BJ (cell line): ENCODE measurements at regions of chr2 and their contacts with region 1.

Region 1: DNA sequence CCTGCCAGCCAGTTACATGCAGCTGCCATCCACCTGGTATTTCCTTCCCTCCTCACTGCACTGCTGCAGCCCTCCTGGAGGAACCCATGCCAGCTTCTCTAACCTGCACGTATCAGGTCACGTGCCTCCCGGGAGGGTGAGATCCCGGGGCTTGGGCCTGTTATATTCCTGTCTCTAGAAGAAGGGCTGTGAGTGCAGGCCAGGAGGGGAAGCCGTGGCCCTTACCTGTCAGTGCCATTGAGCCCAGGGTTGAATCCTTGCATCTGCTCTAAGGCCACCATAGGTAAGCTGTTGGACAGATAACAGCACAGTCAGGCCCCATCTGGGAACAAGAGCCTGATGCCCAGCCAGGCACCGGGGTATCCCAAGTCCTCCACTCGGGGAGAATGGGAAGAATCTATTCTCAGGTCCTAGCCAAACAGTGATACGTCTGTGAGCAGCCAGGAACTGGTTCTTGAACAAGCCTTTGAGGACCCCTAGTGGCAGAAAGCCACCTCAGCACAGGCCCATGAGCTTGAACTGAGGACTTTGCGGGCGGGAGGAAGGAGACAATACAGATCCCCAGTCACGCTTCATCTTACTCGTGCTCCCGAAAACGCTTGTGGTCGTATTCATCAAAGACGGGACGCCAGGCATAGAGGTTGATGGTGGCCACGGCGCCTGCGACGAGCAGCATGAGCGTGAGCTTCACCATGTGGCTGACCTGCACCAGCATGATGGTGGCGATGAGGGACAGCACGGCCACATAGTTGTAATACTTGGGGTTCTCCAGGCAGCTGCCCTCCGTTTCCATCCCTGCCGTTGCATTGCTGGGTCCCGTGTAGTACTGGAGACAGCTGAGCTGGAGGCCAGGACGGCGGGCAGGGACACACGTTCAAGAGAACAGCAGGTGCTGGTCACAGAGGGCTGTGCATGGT is 34.4 kb downstream of the CENPO start:
- DNase-seq: peak; percentile 29
- H3K4me3 ChIP-seq: no peak overlapping the region
- H3K27me3 ChIP-seq: no peaks in the 10 kb centered on the region
- CTCF ChIP-seq: peak; percentile 93

Region 2: DNA sequence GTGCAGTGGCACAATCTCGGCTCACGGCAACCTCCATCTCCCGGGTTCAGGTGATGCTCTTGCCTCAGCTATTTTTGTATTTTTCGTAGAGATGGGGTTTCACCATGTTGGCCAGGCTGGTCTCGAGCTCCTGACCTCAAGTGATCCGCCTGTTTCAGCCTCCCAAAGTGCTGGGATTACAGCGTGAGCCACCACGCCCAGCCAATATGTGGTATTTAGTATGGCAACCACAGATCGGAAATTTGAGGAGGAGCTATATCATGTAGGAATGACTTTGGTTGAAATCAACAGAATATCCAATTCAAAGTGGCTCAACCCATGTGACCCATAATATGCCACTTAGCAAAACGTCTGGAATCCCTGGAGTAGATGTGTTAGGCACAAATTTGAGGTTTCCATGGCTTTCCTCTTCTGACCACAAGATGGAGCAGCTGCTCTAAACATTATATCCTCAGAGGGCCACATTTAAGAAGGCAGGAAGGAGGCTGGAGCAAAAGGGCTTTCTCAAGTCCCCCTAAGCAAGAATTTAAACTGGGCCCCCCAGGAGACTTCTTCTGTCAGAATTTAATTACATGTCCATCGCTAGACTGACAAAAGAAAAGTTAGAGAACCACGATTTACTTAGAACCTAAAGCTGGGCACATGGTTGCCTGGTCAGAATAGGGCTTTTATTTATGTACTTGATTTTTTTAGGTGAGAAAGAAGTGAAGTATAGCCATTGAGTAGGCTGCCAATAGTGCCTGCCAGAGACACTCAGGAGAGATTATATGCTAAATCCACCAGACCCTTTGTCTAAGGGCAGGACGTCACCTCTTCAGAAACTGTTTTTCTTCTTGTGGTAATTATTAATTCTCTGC is 417.7 kb before region 1 on chr2:
- CTCF ChIA-PET with region 1: interaction called, 76 read pairs
- POLR2A ChIA-PET with region 1: no interaction called
- DNase-seq: no peak
- H3K4me3 ChIP-seq: no peak overlapping the region
- H3K27me3 ChIP-seq: no peaks in the 10 kb centered on the region
- CTCF ChIP-seq: peak; percentile 81

Region 3: GRCh38 chr2:24435391-24436316 is 391.9 kb before region 1 on chr2:
- CTCF ChIA-PET with region 1: interaction called, 12 read pairs
- POLR2A ChIA-PET with region 1: no interaction called
- DNase-seq: no peak
- H3K4me3 ChIP-seq: no peak overlapping the region
- H3K27me3 ChIP-seq: no peaks in the 10 kb centered on the region
- CTCF ChIP-seq: no peak

Region 4: GRCh38 chr2:24792874-24793760 is 34.5 kb before region 1 on chr2 and contains the starts of genes CENPO and PTRHD1:
- CTCF ChIA-PET with region 1: interaction called, 12 read pairs
- POLR2A ChIA-PET with region 1: no interaction called
- DNase-seq: peak; percentile 78
- H3K4me3 ChIP-seq: peak within 1 kb of the TSS; percentile 80
- H3K27me3 ChIP-seq: no peaks in the 10 kb centered on the region
- CTCF ChIP-seq: peak; percentile 67
- polyA plus RNA-seq, gene CENPO: 18.2 and 19.4 TPM in 2 replicates
- polyA plus RNA-seq, gene PTRHD1: 44.5 and 59.2 TPM in 2 replicates

Region 5: DNA sequence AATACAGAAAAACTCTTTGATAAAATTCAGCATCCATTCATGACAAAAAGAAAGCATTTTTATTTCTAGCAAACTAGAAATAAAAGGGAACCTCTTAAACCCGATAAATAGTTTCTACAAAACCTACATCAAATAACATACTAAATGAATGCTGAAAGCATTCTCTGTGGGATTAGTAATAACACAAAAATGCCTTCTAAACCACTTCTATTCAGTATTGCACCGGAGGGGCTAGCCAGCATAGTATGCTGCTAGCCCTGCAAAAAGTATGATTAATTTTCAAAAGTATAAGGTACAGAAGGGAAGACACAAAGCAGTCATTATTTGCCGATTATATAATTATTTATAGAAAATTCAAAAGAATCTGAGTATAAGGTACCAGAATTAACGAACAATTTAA is 700.6 kb after region 1 on chr2:
- CTCF ChIA-PET with region 1: no interaction called
- POLR2A ChIA-PET with region 1: no interaction called
- DNase-seq: peak; percentile 32
- H3K4me3 ChIP-seq: no peak overlapping the region
- H3K27me3 ChIP-seq: no peaks in the 10 kb centered on the region
- CTCF ChIP-seq: no peak